Adrenal gland (tissue), 19 donors: ENCODE measurements at regions of chr2 and their contacts with region 1.

Region 1: DNA sequence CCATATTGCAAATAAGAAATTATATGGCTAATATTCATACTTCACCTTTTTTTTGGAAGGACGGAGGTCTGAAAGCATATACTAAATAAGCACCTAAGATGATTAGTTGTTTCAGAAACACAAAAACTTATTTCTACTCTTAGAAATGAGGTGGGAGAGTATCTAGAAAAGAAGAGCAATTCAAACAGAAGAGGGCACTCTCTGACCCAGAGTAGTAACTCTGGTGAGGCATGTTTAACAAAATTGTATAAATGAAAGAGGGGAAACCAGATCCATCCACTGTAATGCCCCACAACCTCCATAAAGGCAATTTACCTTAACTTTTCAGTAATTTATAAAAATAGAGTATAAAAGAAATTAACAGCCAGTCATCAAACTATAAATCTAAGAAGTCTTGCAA is 669.6 kb upstream of the VRK2 start:
- DNase-seq: no peak
- H3K4me3 ChIP-seq: no peak overlapping the region
- H3K27ac ChIP-seq: no peak overlapping the region
- H3K4me1 ChIP-seq: no peaks in the 10 kb centered on the region
- H3K27me3 ChIP-seq: no peaks in the 10 kb centered on the region
- CTCF ChIP-seq: peak in 4 of 6 experiments; percentile 13 to 41 (median 36)
- POLR2A ChIP-seq: no peak

Region 2: GRCh38 chr2:57313678-57314077 is 63.3 kb before region 1 on chr2:
- intact Hi-C with region 1: no loop called
- DNase-seq: no peak
- H3K4me3 ChIP-seq: no peak overlapping the region
- H3K27ac ChIP-seq: no peak overlapping the region
- H3K4me1 ChIP-seq: no peaks in the 10 kb centered on the region
- H3K27me3 ChIP-seq: no peaks in the 10 kb centered on the region
- CTCF ChIP-seq: no peak
- POLR2A ChIP-seq: no peak

Region 3: DNA sequence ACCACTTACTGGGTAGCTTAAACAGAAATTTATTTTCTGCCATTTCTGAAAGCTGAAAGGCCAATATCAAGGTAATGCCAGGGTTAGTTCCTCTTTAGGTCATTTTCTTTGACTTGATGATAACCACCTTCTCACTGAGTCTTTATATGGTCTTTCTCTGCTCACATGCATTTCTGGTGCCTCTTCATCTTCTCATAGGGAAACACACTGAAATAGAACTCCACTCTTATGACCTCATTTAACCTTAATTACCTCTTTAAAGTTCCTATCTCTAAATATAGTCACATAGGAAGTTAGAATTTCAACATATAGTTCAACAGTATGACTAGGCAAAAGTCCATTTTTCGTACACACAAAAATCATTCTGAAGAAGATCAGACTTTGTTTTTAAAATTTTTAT is 52.8 kb after region 1 on chr2:
- intact Hi-C with region 1: no loop called
- DNase-seq: no peak
- H3K4me3 ChIP-seq: no peak overlapping the region
- H3K27ac ChIP-seq: no peak overlapping the region
- H3K4me1 ChIP-seq: peaks cover 0 to 6% of the 10 kb centered on the region in 2 donors
- H3K27me3 ChIP-seq: no peaks in the 10 kb centered on the region
- CTCF ChIP-seq: no peak
- POLR2A ChIP-seq: no peak

Region 4: DNA sequence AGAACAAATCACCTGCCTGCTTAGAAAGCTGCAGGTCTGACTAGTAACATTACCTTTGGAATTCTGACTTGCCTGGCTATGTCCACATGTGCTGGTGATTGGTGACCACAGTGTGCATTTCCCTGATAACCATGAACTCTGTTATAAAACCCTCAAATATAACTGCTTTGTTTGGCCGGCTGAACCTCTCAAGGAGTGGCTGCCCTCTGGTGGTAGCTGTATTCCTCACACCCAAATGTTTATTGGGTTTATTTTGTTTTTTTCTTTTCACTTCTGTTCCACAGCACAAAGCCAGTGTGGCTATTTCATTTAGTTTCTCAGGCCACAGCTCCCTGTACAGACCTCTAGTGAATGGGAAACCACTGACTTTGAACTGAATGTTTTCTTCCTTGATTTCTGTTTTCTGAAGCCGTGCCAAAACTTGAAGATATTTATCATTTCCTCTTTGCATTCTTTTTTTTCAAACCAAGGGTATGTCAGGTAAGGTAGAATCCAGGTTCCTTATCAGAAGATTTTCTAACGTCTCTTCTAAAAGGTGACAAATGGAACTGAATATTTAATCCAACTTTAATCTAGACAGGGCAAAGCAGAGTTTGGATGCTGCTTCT is 120.6 kb after region 1 on chr2:
- intact Hi-C with region 1: loop called in 1 of 2 experiments (anchors 10 kb)
- DNase-seq: peak; percentile 43 to 81 (median 61)
- H3K4me3 ChIP-seq: no peak overlapping the region
- H3K27ac ChIP-seq: no peak overlapping the region
- H3K4me1 ChIP-seq: no peaks in the 10 kb centered on the region
- H3K27me3 ChIP-seq: no peaks in the 10 kb centered on the region
- CTCF ChIP-seq: peak; percentile 61 to 85 (median 80)
- POLR2A ChIP-seq: no peak